ENCODE measurements at regions of chr5 and their contacts with region 1.

Region 1: GRCh38 chr5:81971712-81972495 is at the start of gene ATG10:
- DNase-seq: peak; percentile 97
- H3K4me3 Mint-ChIP-seq: peak within 1 kb of the TSS; percentile 90
- H3K27ac Mint-ChIP-seq: peak within 1 kb of the TSS; percentile 96
- H3K4me1 Mint-ChIP-seq: peaks cover 25% of the 10 kb centered on the region
- H3K27me3 Mint-ChIP-seq: no peaks in the 10 kb centered on the region
- total RNA-seq, gene ATG10: 5.8 and 5.9 TPM in 2 replicates

Region 2: DNA sequence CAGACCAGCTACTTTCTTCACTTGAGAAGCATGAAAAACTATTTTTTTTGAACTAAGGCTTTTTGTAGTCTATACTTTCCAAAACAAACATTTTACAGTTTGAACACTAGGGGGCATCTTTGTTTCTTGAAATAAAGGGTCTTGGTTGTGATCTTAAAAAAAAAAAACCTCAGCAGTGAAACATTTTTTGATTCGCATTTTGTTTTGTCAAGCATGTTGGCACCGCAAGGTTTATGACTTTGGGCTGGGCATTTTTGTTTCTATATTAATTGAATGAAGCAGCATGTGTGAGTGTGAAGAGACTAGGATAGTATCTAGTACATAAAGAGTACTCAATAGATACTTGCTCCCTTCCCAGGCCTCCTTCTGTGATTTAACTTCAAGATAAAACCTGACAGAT is 546.3 kb before region 1 on chr5:
- intact Hi-C with region 1: loop called (anchors 5 kb)
- DNase-seq: no peak
- H3K4me3 Mint-ChIP-seq: no peak overlapping the region
- H3K27ac Mint-ChIP-seq: no peak overlapping the region
- H3K4me1 Mint-ChIP-seq: peaks cover 20% of the 10 kb centered on the region
- H3K27me3 Mint-ChIP-seq: no peaks in the 10 kb centered on the region

Region 3: DNA sequence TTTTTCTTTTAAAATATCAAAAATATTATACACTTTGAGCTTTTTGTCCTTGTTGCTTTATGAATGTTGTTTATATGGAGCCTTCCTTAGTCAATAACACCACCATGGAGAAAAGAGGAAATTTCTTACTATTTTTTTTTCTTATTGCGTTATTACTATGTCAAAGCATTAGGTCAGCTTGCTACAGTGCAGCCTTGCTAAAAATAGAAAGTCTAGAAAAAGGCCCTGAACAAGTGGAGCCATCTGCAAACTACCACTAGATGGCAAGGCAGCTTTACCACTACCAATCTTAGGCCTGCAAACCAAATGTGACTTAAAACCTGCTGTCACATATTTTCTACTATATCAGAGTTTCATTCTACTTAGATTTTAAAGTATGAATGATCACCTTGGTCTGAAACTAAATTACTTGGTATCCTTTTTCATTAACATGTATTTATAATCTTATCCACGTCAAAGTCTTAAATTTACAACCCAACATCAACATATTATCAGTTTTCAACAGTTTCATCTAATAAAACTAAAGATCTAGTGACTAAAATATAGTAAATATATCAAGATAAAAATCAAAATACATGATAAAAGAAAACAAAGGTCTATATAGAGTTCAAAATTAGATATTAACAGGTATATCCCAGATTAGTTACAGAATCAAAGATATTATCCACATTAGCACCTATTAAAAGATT is 464.9 kb before region 1 on chr5:
- intact Hi-C with region 1: loop called (anchors 5 kb)
- DNase-seq: peak; percentile 80
- H3K4me3 Mint-ChIP-seq: no peak overlapping the region
- H3K27ac Mint-ChIP-seq: no peak overlapping the region
- H3K4me1 Mint-ChIP-seq: peaks cover 6% of the 10 kb centered on the region
- H3K27me3 Mint-ChIP-seq: no peaks in the 10 kb centered on the region

Region 4: GRCh38 chr5:81922854-81923279 is 49.0 kb before region 1 on chr5:
- intact Hi-C with region 1: no loop called
- DNase-seq: no peak
- H3K4me3 Mint-ChIP-seq: no peak overlapping the region
- H3K27ac Mint-ChIP-seq: no peak overlapping the region
- H3K4me1 Mint-ChIP-seq: no peaks in the 10 kb centered on the region
- H3K27me3 Mint-ChIP-seq: peaks cover 2% of the 10 kb centered on the region

Region 5: DNA sequence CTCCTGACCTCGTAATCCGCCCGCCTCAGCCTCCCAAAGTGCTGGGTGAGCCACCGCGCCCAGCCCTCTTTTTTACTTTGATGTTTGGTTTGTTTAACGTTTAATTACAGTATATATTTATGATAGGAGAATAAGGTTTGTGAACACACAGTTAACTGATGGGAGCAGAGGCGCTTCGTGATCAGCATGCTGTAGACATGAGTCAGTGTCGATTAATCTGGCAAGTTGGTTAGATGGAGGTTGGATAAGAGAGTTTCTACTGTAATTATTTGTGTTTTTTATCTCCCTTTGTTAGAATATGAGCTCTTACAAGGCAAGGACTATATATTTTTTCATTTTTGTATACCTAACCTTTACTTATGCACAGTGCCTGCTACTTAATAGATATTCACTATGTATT is 14.2 kb after region 1 on chr5:
- intact Hi-C with region 1: no loop called
- DNase-seq: no peak
- H3K4me3 Mint-ChIP-seq: no peak overlapping the region
- H3K27ac Mint-ChIP-seq: no peak overlapping the region
- H3K4me1 Mint-ChIP-seq: no peaks in the 10 kb centered on the region
- H3K27me3 Mint-ChIP-seq: no peaks in the 10 kb centered on the region

Region 6: DNA sequence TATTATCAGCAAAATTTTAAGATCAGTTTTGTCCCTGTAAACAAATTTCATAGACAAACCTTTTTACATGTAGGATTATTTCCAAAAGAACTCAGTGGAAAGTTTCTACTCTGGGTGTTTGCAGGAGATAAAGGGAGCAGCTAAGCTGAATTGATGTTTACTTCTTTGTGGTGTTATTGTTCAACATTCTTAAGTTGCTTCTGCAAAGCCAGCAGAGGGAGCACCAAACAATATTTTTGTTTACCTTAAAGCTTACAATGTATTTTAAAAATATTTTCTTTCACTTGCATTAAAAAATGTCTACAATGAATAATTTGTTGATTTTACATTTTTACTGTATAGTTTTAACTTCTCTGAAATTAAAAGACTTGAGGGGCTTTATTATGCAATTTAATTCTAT is 135.4 kb after region 1 on chr5:
- intact Hi-C with region 1: loop called (anchors 5 kb)
- DNase-seq: no peak
- H3K4me3 Mint-ChIP-seq: no peak overlapping the region
- H3K27ac Mint-ChIP-seq: no peak overlapping the region
- H3K4me1 Mint-ChIP-seq: peaks cover 4% of the 10 kb centered on the region
- H3K27me3 Mint-ChIP-seq: no peaks in the 10 kb centered on the region

Region 7: GRCh38 chr5:82165740-82166530 is 194.0 kb after region 1 on chr5:
- intact Hi-C with region 1: loop called (anchors 10 kb)
- DNase-seq: peak; percentile 76
- H3K4me3 Mint-ChIP-seq: no peak overlapping the region
- H3K27ac Mint-ChIP-seq: no peak overlapping the region
- H3K4me1 Mint-ChIP-seq: peaks cover 5% of the 10 kb centered on the region
- H3K27me3 Mint-ChIP-seq: no peaks in the 10 kb centered on the region

Region 8: GRCh38 chr5:82278095-82278918 is 306.4 kb after region 1 on chr5 and contains the start of gene RPS23:
- intact Hi-C with region 1: loop called (anchors 1 kb)
- DNase-seq: peak; percentile 96
- H3K4me3 Mint-ChIP-seq: peak within 1 kb of the TSS; percentile 89
- H3K27ac Mint-ChIP-seq: peak within 1 kb of the TSS; percentile 98
- H3K4me1 Mint-ChIP-seq: peaks cover 32% of the 10 kb centered on the region
- H3K27me3 Mint-ChIP-seq: no peaks in the 10 kb centered on the region
- total RNA-seq, gene RPS23: 2,481 and 2,489 TPM in 2 replicates

Region 9: GRCh38 chr5:83076742-83077661 is 1105.1 kb after region 1 on chr5 and contains the starts of genes TMEM167A and XRCC4:
- intact Hi-C with region 1: loop called (anchors 10 kb)
- DNase-seq: peak; percentile 98
- H3K4me3 Mint-ChIP-seq: peak within 1 kb of the TSS; percentile 97
- H3K27ac Mint-ChIP-seq: peak within 1 kb of the TSS; percentile 98
- H3K4me1 Mint-ChIP-seq: peaks cover 35% of the 10 kb centered on the region
- H3K27me3 Mint-ChIP-seq: no peaks in the 10 kb centered on the region
- total RNA-seq, gene TMEM167A: 82.0 and 87.4 TPM in 2 replicates
- total RNA-seq, gene XRCC4: 11.4 and 11.6 TPM in 2 replicates

Measured in activated CD4-positive, alpha-beta T cell treated with anti-CD3 and anti-CD28 coated beads, Interleukin-2, amount 10 ng/mL, durations not matched to agents 24 days and 14 days (primary cell).